Calu3 (cell line): ENCODE measurements at regions of chr18 and their contacts with region 1.

Region 1: DNA sequence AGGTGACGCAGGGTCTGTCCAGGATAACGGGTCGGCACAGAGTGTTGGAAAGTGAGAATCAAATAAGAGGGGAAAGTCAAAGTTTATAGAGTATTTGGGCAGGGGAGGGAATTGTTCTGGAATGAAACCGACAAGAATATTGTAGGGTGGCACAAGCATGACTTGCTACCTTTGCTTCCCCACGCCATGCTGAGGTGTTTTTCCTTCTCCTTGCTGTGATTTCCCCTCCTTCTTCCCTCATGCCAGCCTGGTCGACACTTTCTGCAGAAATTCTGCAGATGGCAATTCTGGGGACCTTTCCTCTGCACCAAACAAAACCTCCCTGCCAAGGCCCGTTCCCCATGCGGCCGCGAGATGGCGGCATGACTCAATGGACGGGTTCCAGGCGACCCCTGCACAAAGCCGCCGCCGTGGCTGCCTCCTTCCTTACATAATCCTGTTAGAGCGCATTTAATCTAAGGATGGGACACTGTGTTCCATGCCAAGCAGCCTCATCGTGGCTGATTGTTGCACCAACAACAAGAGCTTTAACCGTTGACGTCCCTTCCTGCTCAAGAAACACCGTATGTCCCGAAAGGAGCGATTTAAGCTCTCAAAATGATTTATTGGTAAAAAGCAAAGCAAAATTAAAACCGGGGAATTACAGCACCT is at the start of gene MRO:
- DNase-seq: peak; percentile 87
- H3K4me3 Mint-ChIP-seq: no peak within 1 kb of the TSS
- H3K27ac Mint-ChIP-seq: no peak within 1 kb of the TSS
- H3K4me1 Mint-ChIP-seq: no peaks in the 10 kb centered on the region
- H3K27me3 Mint-ChIP-seq: peaks cover 10% of the 10 kb centered on the region
- CTCF ChIP-seq: peak; percentile 84
- total RNA-seq, gene MRO: not detected in 2 replicates

Region 2: GRCh38 chr18:50507120-50507590 is 312.7 kb before region 1 on chr18:
- CTCF ChIA-PET with region 1: no interaction called
- intact Hi-C with region 1: loop called (anchors 1 kb)
- DNase-seq: peak; percentile 63
- H3K4me3 Mint-ChIP-seq: no peak overlapping the region
- H3K27ac Mint-ChIP-seq: no peak overlapping the region
- H3K4me1 Mint-ChIP-seq: no peaks in the 10 kb centered on the region
- H3K27me3 Mint-ChIP-seq: peaks cover 87% of the 10 kb centered on the region
- CTCF ChIP-seq: peak; percentile 65

Region 3: DNA sequence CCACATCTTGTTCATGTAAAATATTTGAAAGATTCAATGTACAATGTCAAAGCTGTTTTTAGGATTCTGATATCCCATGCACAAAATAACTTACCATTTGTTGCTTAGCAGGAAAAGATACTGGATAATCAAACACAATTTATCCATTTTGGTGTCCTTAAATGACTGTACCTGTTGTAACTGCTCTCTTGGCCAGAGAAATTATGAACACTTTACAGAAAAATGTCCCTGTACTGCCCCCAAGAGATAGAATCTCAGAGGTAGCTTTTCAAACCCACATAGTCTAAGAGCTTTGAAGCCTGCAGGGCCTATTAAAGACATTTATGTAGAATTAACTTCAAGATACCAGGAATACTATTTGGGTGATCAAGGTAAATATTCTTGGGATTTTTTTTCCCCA is 46.9 kb after region 1 on chr18:
- CTCF ChIA-PET with region 1: interaction called, 4 read pairs
- intact Hi-C with region 1: loop called (anchors 1 kb)
- DNase-seq: no peak
- H3K4me3 Mint-ChIP-seq: no peak overlapping the region
- H3K27ac Mint-ChIP-seq: no peak overlapping the region
- H3K4me1 Mint-ChIP-seq: peaks cover 16% of the 10 kb centered on the region
- H3K27me3 Mint-ChIP-seq: no peaks in the 10 kb centered on the region
- CTCF ChIP-seq: no peak

Region 4: GRCh38 chr18:50956116-50956515 is 136.3 kb after region 1 on chr18:
- CTCF ChIA-PET with region 1: no interaction called
- intact Hi-C with region 1: loop called (anchors 10 kb)
- DNase-seq: no peak
- H3K4me3 Mint-ChIP-seq: no peak overlapping the region
- H3K27ac Mint-ChIP-seq: no peak overlapping the region
- H3K4me1 Mint-ChIP-seq: no peaks in the 10 kb centered on the region
- H3K27me3 Mint-ChIP-seq: no peaks in the 10 kb centered on the region
- CTCF ChIP-seq: no peak

Region 5: DNA sequence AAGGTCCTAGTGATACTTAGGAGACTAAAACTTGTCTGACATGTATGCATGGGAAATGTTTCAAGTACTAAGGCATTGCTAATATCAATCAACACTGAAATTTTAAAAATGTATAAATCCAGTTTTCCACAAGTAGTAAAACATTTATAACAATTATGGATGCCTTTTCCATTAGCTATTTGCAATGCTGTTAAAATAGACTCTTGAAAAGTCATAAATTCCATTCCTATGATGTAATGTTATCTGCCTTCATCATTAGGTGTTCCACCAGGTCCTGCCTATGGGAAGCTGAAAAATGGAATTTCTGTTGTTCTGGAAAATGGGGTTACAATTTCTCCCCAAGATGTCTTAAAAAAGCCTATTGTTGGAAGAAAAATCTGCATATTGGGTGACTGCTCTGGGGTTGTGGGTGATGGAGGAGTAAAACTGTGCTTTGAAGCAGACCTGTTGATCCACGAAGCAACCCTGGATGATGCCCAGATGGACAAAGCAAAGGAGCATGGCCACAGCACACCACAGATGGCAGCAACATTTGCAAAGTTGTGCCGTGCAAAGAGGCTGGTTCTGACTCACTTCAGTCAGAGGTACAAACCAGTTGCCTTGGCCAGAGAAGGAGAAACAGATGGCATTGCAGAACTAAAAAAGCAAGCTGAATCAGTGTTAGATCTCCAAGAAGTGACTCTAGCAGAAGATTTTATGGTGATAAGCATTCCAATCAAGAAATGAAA is 166.7 kb after region 1 on chr18:
- CTCF ChIA-PET with region 1: no interaction called
- intact Hi-C with region 1: no loop called
- DNase-seq: no peak
- H3K4me3 Mint-ChIP-seq: no peak overlapping the region
- H3K27ac Mint-ChIP-seq: no peak overlapping the region
- H3K4me1 Mint-ChIP-seq: peaks cover 11% of the 10 kb centered on the region
- H3K27me3 Mint-ChIP-seq: no peaks in the 10 kb centered on the region
- CTCF ChIP-seq: no peak

Region 6: GRCh38 chr18:51051105-51051712 is 231.4 kb after region 1 on chr18:
- CTCF ChIA-PET with region 1: interaction called, 3 read pairs
- intact Hi-C with region 1: loop called (anchors 1 kb)
- DNase-seq: peak; percentile 24
- H3K4me3 Mint-ChIP-seq: no peak overlapping the region
- H3K27ac Mint-ChIP-seq: no peak overlapping the region
- H3K4me1 Mint-ChIP-seq: no peaks in the 10 kb centered on the region
- H3K27me3 Mint-ChIP-seq: no peaks in the 10 kb centered on the region
- CTCF ChIP-seq: peak; percentile 81

Region 7: GRCh38 chr18:51197661-51198424 is 378.0 kb after region 1 on chr18 and contains the start of gene MEX3C:
- CTCF ChIA-PET with region 1: interaction called, 4 read pairs
- intact Hi-C with region 1: loop called (anchors 10 kb)
- DNase-seq: peak; percentile 99
- H3K4me3 Mint-ChIP-seq: peak within 1 kb of the TSS; percentile 80
- H3K27ac Mint-ChIP-seq: peak within 1 kb of the TSS; percentile 100
- H3K4me1 Mint-ChIP-seq: peaks cover 9% of the 10 kb centered on the region
- H3K27me3 Mint-ChIP-seq: no peaks in the 10 kb centered on the region
- CTCF ChIP-seq: peak; percentile 25
- total RNA-seq, gene MEX3C: 71.5 and 86.9 TPM in 2 replicates